Right lobe of liver (tissue), 6 donors: ENCODE measurements at regions of chr10 and their contacts with region 1.

Region 1: DNA sequence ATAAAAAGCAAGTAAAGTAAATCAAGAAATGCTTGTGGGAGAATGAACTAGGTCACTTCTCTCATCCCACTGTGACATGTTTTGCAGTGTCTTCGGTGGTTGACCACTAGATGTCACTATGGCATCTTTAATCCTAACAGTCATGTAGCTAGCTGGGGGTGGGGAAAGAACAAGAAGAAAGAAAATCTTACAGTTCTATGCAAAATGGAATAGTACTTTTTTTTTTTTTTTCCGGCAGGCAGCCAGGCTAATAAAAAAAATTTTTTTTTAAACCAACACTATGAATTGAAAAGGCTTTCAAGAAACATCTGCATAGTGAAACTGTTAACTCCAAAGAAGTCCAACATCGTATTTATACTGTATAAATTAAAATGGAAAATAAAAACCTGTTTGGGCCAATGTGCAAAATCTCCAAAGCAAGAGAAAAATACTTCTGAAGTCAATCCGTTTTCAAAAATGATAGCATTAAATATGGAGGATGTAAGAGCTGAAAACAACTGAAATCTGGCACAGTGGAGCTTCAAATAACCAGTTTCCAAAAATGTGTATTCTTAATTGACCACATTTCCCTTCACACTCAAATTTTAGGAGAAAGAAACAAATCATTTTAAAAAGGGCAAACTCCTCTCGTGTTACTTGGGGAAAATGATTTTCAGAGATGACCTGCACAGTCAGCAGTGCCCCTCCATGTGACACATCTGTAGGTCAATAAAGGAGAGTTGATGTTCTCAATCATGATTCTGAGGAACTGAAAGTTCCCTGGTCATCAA is 38.5 kb downstream of the CDK1 start:
- DNase-seq: peak in 1 of 3 donors; percentile 24
- ATAC-seq: peak; percentile 94 to 97 (median 96)
- H3K4me3 ChIP-seq: no peak overlapping the region
- H3K27ac ChIP-seq: no peak overlapping the region
- H3K4me1 ChIP-seq: peaks cover 0 to 7% (median 0%) of the 10 kb centered on the region in 4 donors
- H3K27me3 ChIP-seq: no peaks in the 10 kb centered on the region
- CTCF ChIP-seq: peak; percentile 80 to 87 (median 84)
- POLR2A ChIP-seq: no peak

Region 2: DNA sequence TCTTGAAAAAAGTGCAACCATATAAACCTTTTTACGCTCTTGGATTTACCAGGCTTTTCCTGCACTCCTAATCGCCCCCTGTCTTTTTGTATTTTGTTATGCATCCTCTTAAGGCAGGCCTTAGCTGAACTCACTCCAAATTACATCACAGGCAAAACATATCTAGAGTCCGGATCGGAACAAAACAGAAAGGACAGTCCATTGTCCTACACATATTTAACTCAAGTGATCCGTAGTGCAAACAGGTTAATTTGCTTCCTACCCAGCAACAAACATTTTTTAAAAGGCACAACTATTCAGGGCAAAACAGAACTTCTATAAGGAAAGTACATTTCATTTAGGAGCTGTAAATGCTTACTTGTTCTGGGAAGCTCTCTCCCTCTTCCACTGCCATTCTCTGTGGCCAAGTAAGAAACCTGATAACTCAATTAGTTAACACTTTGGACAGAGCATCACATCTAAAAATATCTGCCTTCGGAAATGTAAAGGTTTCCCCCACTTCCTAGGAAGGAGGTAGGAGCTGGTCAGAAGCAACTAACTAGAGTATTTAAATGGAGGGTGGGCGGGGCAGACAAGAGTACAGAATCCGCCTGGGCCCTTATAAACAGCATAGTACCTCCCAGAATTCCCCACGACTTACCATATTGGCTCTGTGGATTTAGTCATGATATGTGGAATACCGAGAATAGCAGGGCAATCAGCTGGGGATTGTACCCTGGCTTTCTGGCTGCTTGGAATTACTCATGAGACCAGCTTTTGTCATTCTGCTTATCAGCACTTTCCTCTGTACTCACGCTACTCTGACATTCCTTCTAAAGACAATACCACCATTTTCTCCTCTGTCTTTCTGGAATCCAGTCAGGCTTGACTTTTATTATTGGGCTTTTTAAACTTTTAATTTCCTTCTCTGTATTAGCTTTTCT is 516.6 kb before region 1 on chr10:
- intact Hi-C with region 1: no loop called
- DNase-seq: no peak
- ATAC-seq: peak in 1 of 4 donors; percentile 22
- H3K4me3 ChIP-seq: no peak overlapping the region
- H3K27ac ChIP-seq: no peak overlapping the region
- H3K4me1 ChIP-seq: peaks cover 0 to under 1% (median 0%) of the 10 kb centered on the region in 4 donors
- H3K27me3 ChIP-seq: no peaks in the 10 kb centered on the region
- CTCF ChIP-seq: no peak
- POLR2A ChIP-seq: no peak

Region 3: GRCh38 chr10:60964257-60965235 is 147.7 kb after region 1 on chr10:
- intact Hi-C with region 1: loop called in 1 of 2 experiments (anchors 5 kb)
- DNase-seq: peak in 2 of 3 donors; percentile 40 to 70
- ATAC-seq: peak; percentile 96 to 97 (median 96)
- H3K4me3 ChIP-seq: no peak overlapping the region
- H3K27ac ChIP-seq: peak overlapping the region in 2 of 3 donors; percentile 4 to 75
- H3K4me1 ChIP-seq: peaks cover 0 to 7% (median 0%) of the 10 kb centered on the region in 4 donors
- H3K27me3 ChIP-seq: no peaks in the 10 kb centered on the region
- CTCF ChIP-seq: peak; percentile 74 to 88 (median 84)
- POLR2A ChIP-seq: no peak

Region 4: DNA sequence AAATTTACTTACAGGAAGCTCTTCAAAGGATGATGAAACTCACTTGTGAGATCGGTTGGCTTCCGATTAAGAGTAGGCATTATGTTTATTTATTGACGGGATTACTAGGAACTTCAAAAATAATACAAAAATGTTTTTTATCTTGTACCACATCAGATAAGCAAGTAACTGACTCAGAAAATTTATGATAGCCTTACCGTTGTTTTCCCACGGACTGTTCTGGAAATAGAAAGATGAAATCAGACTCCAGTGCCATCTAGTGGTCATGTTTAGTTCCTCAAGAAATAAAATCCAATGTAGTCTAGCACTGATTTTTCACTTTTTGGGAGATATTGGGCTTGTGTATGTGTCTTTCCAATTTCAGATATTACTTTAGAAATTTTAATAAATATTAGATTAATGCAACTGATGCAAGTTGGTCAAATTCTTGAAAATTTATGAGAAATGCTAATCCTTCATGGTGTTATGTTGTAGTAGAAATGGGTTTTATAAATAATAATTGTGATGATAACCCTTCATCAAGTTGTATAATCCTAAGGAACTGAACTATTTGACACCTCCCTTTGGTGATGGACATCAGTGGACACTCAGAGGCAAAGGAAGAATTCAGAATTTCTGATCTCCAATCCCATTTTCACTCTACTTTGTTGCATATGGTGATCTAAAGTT is 467.5 kb after region 1 on chr10:
- intact Hi-C with region 1: loop called (anchors 10 kb)
- DNase-seq: no peak
- ATAC-seq: peak; percentile 73 to 90 (median 80)
- H3K4me3 ChIP-seq: no peak overlapping the region
- H3K27ac ChIP-seq: no peak overlapping the region
- H3K4me1 ChIP-seq: no peaks in the 10 kb centered on the region
- H3K27me3 ChIP-seq: no peaks in the 10 kb centered on the region
- CTCF ChIP-seq: peak; percentile 64 to 86 (median 83)
- POLR2A ChIP-seq: no peak